Panc1 (cell line): ENCODE measurements at regions of chr6 and their contacts with region 1.

Region 1: GRCh38 chr6:154791556-154792317 is 58.5 kb downstream of the SCAF8 start:
- DNase-seq: no peak
- ATAC-seq: no peak
- H3K4me3 ChIP-seq: no peak overlapping the region
- H3K27ac ChIP-seq: peak overlapping the region; percentile 13; the same call in 1 of the 2 replicates
- H3K4me1 ChIP-seq: peaks cover 9% of the 10 kb centered on the region; the same call in 1 of the 2 replicates
- H3K27me3 ChIP-seq: no peaks in the 10 kb centered on the region
- CTCF ChIP-seq: no peak

Region 2: GRCh38 chr6:154721460-154721859 is 70.3 kb before region 1 on chr6:
- CTCF ChIA-PET with region 1: interaction called, 11 read pairs
- POLR2A ChIA-PET with region 1: no interaction called
- in situ Hi-C with region 1: no loop called
- intact Hi-C with region 1: no loop called
- DNase-seq: no peak
- ATAC-seq: no peak
- H3K4me3 ChIP-seq: no peak overlapping the region
- H3K27ac ChIP-seq: no peak overlapping the region
- H3K4me1 ChIP-seq: no peaks in the 10 kb centered on the region
- H3K27me3 ChIP-seq: no peaks in the 10 kb centered on the region
- CTCF ChIP-seq: no peak